Posterior cingulate gyrus (tissue), 11 donors: ENCODE measurements at regions of chr14 and their contacts with region 1.

Region 1: DNA sequence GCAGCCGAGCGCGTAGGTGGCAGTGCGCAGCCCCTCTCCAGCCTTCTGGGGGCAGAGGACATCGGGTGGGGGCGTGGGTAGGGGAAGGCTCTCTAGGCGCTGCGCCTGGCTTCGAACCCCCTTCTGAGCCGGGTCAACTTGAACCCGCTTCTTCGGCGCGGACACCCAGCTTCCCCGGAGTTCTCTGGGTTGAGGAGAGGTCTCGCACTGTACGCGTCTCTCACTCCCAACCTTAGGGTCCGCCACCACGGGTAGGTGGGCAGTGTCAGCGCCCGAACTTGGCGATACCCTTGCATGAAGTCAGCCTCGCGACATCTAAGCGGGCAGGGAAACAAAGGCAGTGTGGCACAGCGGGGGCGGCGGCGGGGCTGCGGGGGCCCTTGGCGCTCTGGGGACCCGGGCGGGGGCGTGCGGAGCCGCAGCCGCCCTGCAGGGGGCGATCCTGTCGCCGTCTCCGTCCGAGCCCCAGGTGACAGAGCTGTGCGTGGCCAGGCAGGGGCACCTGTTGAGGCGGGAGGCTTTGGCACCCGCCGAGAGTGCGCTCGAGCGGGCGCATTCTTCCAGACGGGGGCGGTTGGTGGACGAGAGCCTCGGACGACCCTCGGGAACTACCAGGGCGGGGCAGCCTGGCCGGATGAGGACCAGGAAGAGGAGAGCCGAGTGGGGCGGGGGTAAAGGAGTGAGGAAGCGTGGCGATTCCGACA is 1.1 kb downstream of the GALNT16 start:
- DNase-seq: peak in 7 of 10 donors; percentile 25 to 89 (median 36)

Region 2: DNA sequence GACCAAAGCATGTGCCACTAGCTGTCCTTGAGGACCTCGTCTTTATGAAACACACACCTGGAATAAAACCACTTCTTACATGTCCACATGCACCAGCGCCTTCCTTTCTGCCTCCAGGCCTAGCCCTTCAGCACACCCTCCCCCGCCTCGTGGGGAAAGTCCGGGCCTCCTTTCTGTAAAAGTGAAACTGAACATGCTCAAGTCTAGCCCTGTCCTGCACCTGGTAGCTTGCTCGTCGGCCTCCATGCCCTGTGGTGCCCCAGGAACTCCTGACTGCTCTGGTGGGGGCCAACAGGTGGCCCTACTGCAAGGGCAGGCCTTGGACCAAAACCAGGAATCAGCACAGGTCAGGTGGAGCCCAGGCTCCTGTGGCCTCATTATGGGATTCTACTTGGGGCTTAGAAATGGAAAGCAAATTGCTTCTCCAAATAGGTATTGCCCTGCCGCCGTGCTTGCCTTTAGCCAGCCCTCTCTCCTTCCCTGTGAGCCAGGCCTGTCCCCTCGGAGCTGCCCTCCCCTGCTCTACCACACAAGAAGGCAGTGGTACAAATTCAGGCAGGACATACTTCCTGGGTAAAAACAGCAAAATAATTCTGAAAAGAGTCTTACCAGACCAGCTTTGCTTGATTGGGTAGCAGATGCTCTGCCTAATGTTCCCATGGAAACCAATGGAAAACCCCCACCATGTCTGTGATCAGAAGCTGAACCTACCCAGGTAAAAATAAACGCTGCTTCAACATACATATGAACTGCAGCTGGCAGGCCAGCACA is 93.6 kb after region 1 on chr14:
- intact Hi-C with region 1: loop called (anchors 5 kb)
- DNase-seq: peak in 1 of 10 donors; percentile 78